Lower leg skin (tissue), 4 donors: ENCODE measurements at regions of chr12 and their contacts with region 1.

Region 1: GRCh38 chr12:117212563-117213190 is 22.4 kb upstream of the FBXO21 start:
- DNase-seq: peak; percentile 73 to 95
- H3K4me3 ChIP-seq: no peak overlapping the region
- CTCF ChIP-seq: peak in 1 of 3 donors; percentile 38
- POLR2A ChIP-seq: no peak

Region 2: DNA sequence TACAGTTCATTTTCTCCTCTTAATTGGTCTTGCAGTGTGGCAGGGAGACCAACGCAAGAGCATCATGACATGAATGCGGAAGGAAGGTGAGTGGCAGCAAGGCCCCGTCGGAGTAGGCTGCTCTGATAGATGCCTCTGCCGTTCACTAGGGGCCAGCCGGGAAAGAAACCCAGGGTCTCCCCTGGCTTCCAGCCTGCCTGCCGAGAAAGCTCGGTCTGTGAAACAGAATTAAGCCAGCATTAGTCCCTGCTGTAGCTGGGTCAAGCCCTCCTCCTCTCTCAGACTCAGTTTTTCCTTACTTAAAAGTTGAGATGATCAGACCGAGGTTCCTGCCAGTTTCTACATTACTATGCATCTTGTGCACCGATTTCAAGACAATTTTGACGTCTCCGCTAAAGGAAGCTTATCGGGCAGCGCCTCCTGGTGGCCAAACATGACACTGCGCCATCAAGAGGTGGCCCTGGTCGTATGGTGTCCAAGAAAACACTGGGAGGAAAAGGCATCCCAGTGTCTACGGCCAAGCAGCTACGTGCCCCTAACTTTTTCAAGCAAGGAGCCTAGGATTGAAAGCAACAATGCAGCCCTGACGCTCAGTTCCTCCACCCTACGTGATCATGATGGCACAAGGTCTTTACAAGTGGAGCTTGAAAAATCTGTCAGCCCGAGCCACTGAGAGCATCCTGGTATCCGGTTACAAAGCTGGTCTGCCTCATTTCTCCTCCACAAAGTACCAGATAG is 624.5 kb after region 1 on chr12:
- intact Hi-C with region 1: loop called (anchors 5 kb)
- DNase-seq: peak; percentile 74 to 96
- H3K4me3 ChIP-seq: no peak overlapping the region
- CTCF ChIP-seq: peak in 1 of 3 donors; percentile 87
- POLR2A ChIP-seq: no peak